Caco-2 (cell line): ENCODE measurements at regions of chr16 and their contacts with region 1.

Region 1: DNA sequence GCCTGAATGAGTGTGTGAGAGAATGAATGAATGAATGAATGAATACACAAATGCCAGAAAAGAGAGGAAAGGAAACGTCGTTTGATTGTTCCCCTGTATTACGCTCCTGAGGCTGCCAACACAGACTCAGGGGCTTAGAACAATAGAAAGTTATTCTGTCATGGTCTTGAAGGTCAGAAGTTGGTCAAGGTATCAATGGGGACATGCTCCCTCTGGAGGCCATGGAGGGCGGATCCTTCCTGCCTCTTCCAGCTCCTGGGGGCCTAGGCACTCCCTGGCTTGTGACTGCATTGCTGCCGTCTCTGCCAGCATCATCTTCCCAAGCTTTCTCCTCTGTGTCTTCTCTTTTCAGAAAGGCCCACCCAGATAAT is 1.5 kb upstream of the SLC38A8 start:
- DNase-seq: peak; percentile 65 to 69
- H3K4me3 ChIP-seq: no peak overlapping the region
- H3K4me3 Mint-ChIP-seq: peak overlapping the region; percentile 71
- H3K27ac Mint-ChIP-seq: no peak overlapping the region
- H3K4me1 ChIP-seq: peaks cover 30% of the 10 kb centered on the region
- H3K4me1 Mint-ChIP-seq: peaks cover 17% of the 10 kb centered on the region
- H3K27me3 ChIP-seq: no peaks in the 10 kb centered on the region
- H3K27me3 Mint-ChIP-seq: peaks cover 2% of the 10 kb centered on the region
- CTCF ChIP-seq: peak; percentile 43 to 65

Region 2: GRCh38 chr16:83826146-83826913 is 217.8 kb before region 1 on chr16:
- CTCF ChIA-PET with region 1: no interaction called
- POLR2A ChIA-PET with region 1: no interaction called
- intact Hi-C with region 1: loop called (anchors 5 kb)
- DNase-seq: peak; percentile 79 to 88
- H3K4me3 ChIP-seq: no peak overlapping the region
- H3K4me3 Mint-ChIP-seq: no peak overlapping the region
- H3K27ac Mint-ChIP-seq: no peak overlapping the region
- H3K4me1 ChIP-seq: no peaks in the 10 kb centered on the region
- H3K4me1 Mint-ChIP-seq: peaks cover 6% of the 10 kb centered on the region
- H3K27me3 ChIP-seq: no peaks in the 10 kb centered on the region
- H3K27me3 Mint-ChIP-seq: no peaks in the 10 kb centered on the region
- CTCF ChIP-seq: peak; percentile 96 to 98

Region 3: DNA sequence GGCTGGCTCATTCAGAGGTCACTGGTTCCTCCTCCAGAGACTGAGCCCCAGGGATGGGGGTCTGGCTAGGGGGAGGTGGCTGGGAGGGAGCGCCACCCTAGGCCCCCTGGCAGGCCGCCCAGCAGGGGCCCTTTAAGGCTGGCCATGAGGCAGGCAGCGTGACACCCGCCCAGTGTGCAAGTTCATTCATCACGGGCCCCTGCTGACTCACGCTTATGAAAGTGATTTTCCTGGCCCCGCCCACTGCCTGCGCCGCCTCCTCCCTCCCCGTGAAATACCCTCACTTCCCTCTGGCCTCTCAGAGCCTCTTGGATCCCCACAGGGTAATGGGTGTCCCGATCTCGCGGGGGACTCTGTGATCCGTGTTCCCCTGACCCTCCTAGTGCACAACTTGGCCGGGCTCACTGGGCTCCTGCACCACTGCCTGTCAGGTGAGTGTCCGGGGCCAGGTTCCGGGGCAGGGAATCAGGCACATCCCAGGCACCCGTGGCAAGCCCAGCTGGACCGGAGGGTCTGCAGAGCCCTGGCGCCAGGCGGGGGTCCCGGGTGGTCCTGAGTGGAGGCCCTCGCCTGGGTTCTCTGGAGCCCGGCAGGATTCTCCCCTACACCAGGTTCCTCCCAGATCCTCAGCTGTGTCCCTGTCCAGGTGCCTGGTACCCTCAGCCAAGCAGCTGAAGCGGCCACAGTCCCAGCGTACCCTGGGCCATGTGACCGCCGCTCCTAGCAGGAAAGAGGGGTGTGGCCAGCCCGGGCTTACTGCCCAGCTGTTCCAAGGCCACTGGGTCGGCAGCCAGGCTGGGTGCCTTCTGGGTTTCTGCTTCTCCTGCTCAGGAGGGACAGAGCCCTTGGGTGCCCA is 90.9 kb before region 1 on chr16 and contains the start of gene OSGIN1:
- CTCF ChIA-PET with region 1: interaction called, 37 read pairs
- POLR2A ChIA-PET with region 1: no interaction called
- intact Hi-C with region 1: loop called (anchors 1 kb)
- DNase-seq: peak; percentile 92
- H3K4me3 ChIP-seq: peak within 1 kb of the TSS; percentile 68
- H3K4me3 Mint-ChIP-seq: peak within 1 kb of the TSS; percentile 94
- H3K27ac Mint-ChIP-seq: peak within 1 kb of the TSS; percentile 94
- H3K4me1 ChIP-seq: peaks cover 22% of the 10 kb centered on the region
- H3K4me1 Mint-ChIP-seq: peaks cover 12% of the 10 kb centered on the region
- H3K27me3 ChIP-seq: no peaks in the 10 kb centered on the region
- H3K27me3 Mint-ChIP-seq: no peaks in the 10 kb centered on the region
- CTCF ChIP-seq: no peak
- total RNA-seq, gene OSGIN1: 18.6 and 21.8 TPM in 2 replicates

Region 4: DNA sequence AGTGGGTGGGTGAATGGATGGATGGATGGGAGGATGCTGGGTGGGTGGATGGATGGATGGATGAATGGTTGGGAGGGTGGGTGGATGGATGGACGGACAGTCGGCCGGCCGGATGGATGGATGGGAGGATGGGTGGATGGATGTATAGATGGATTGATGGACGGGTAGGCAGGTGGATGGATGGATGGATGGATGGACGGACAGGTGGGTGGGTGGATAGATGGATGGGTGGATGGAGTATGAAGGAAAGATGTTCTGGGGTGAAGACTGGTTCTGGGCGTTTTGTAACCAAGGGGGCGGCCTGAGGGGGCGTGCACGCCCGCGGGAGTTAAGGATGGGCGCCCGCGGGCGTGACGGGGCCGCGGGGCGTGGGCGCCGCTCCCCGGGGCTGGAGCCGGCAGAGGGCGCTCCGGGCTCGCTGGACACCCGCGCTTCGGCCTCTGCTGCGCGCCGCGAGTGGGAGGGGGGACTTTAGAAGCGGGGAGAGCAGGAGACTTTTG is 76.2 kb before region 1 on chr16 and contains the start of gene NECAB2:
- CTCF ChIA-PET with region 1: interaction called, 5 read pairs
- POLR2A ChIA-PET with region 1: no interaction called
- intact Hi-C with region 1: loop called (anchors 1 kb)
- DNase-seq: peak in 1 of 2 experiments; percentile 81
- H3K4me3 ChIP-seq: peak within 1 kb of the TSS; percentile 41
- H3K4me3 Mint-ChIP-seq: peak within 1 kb of the TSS; percentile 83
- H3K27ac Mint-ChIP-seq: peak within 1 kb of the TSS; percentile 30
- H3K4me1 ChIP-seq: no peaks in the 10 kb centered on the region
- H3K4me1 Mint-ChIP-seq: no peaks in the 10 kb centered on the region
- H3K27me3 ChIP-seq: no peaks in the 10 kb centered on the region
- H3K27me3 Mint-ChIP-seq: peaks cover 4% of the 10 kb centered on the region
- CTCF ChIP-seq: peak; percentile 71 to 76
- total RNA-seq, gene NECAB2: 0.68 and 0.79 TPM in 2 replicates